CD8-positive, alpha-beta T cell (primary cell): ENCODE measurements at regions of chr19 and their contacts with region 1.

Region 1: DNA sequence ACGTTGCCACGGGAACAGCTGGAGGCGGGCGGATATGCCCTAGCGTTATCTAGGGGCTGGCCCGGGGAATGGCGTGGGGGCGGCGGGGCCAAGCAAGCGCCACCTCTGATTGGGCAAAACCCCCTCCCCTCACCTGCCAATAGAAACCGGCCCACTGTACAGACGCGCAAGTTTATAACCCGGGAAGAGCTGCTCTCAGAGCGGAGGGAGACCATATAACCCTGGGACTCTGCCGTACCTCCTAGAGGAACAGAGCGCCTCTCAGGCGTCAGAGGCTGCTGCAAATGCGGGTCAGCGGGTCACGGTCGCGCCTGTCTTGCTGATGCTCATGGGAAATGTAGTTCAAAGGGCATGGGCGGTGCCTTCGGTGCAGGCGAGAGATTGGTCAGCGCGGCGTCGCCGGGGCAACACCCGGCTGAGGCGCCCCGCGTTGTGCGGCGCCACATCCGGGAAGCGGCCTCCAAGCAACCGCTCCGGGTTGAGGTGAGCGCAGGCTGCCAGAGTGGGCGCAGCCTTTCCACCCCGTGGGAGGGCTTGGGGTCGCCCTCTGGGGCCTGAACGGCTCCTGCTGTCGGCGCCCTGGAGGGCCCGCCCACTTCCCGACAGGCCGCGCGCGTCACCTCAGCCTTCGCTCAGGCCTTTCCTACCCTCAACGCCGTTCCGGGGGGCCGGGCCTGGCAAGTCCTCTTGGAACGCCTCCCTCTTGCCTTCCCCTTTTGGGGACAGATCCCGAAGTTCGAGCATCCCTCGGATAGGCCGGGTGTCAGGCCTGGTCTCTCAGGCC is at the start of gene ZNF446:
- DNase-seq: peak; percentile 92 to 99 (median 97)
- ATAC-seq: peak; percentile 82
- H3K4me3 ChIP-seq: peak within 1 kb of the TSS; percentile 56 to 72
- H3K4me3 Mint-ChIP-seq: peak within 1 kb of the TSS; percentile 92
- H3K27ac ChIP-seq: peak within 1 kb of the TSS; percentile 75 to 95
- H3K27ac Mint-ChIP-seq: peak within 1 kb of the TSS; percentile 97
- H3K4me1 ChIP-seq: peaks cover 17% of the 10 kb centered on the region
- H3K4me1 Mint-ChIP-seq: peaks cover 16% of the 10 kb centered on the region
- H3K27me3 ChIP-seq: no peaks in the 10 kb centered on the region
- H3K27me3 Mint-ChIP-seq: no peaks in the 10 kb centered on the region
- CTCF ChIP-seq: no peak
- total RNA-seq, gene ZNF446: 14.6 to 16.5 TPM

Region 2: GRCh38 chr19:58182989-58183816 is 292.7 kb before region 1 on chr19 and contains the start of gene ZNF274:
- CTCF ChIA-PET with region 1: no interaction called
- POLR2A ChIA-PET with region 1: no interaction called
- intact Hi-C with region 1: loop called in 1 of 2 experiments (anchors 1 kb)
- DNase-seq: peak; percentile 88 to 96 (median 94)
- ATAC-seq: peak; percentile 86
- H3K4me3 ChIP-seq: peak within 1 kb of the TSS; percentile 90 to 94
- H3K4me3 Mint-ChIP-seq: peak within 1 kb of the TSS; percentile 91
- H3K27ac ChIP-seq: peak within 1 kb of the TSS; percentile 99 to 100
- H3K27ac Mint-ChIP-seq: peak within 1 kb of the TSS; percentile 100
- H3K4me1 ChIP-seq: peaks cover 9% of the 10 kb centered on the region
- H3K4me1 Mint-ChIP-seq: peaks cover 22% of the 10 kb centered on the region
- H3K27me3 ChIP-seq: no peaks in the 10 kb centered on the region
- H3K27me3 Mint-ChIP-seq: no peaks in the 10 kb centered on the region
- CTCF ChIP-seq: no peak
- total RNA-seq, gene ZNF274: 52.7 to 58.9 TPM

Region 3: GRCh38 chr19:58451358-58452101 is 24.4 kb before region 1 on chr19 and contains the start of gene ZNF324B:
- CTCF ChIA-PET with region 1: interaction called, 5 read pairs
- POLR2A ChIA-PET with region 1: no interaction called
- intact Hi-C with region 1: loop called (anchors 1 kb)
- DNase-seq: peak; percentile 92 to 98 (median 96)
- ATAC-seq: peak; percentile 96
- H3K4me3 ChIP-seq: peak within 1 kb of the TSS; percentile 55 to 83
- H3K4me3 Mint-ChIP-seq: peak within 1 kb of the TSS; percentile 82
- H3K27ac ChIP-seq: peak within 1 kb of the TSS; percentile 44 to 70
- H3K27ac Mint-ChIP-seq: peak within 1 kb of the TSS; percentile 27
- H3K4me1 ChIP-seq: peaks cover 10% of the 10 kb centered on the region
- H3K4me1 Mint-ChIP-seq: peaks cover 16% of the 10 kb centered on the region
- H3K27me3 ChIP-seq: peaks cover 0 to 9% of the 10 kb centered on the region in 2 experiments
- H3K27me3 Mint-ChIP-seq: peaks cover 9% of the 10 kb centered on the region
- CTCF ChIP-seq: no peak
- total RNA-seq, gene ZNF324B: 6.2 to 6.5 TPM

Region 4: DNA sequence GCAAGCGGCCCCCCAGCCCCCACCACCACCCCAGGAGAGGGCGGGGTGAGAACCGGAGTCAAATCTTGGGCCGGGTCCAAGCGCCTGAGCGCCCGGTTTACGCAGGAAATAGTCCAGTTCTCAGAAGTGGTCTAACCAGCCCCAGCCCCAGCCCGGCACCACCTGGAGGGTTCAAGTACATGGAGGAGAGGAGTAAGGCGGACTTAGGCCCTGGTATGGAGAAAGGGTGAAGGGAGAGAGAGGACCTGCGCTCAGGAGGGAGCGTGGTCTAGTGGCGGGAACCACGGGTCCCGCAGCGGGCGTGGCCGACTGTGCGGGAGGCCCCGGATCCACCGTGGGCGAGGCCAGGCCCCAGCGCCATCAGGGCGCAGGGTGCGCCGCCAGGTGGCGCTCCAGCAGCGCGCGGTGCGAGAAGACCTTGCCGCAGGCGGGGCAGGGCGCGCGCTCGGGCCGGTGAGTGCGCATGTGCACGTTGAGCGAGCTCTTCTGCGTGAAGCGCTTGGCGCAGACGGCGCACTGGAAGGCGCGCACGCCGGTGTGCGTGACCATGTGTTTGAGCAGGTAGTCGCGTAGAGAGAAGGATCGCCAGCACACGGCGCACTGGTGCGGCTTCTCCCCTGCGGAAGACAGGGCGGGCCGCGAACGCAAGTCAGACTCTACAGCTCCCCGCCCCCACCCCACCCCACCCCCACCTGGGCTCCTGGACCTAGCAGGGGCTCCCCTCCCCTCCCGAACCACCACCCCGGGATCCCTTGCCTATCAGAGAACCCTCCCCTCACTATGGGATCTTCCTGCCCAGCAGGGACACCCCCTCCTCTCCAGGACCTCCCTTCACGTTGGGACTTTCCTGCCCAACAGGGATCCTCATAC is 38.0 kb after region 1 on chr19:
- CTCF ChIA-PET with region 1: no interaction called
- POLR2A ChIA-PET with region 1: interaction called, 4 read pairs
- intact Hi-C with region 1: loop called (anchors 1 kb)
- DNase-seq: peak; percentile 86 to 97 (median 94)
- ATAC-seq: peak; percentile 94
- H3K4me3 ChIP-seq: peak overlapping the region; percentile 10 to 32
- H3K4me3 Mint-ChIP-seq: peak overlapping the region; percentile 78
- H3K27ac ChIP-seq: peak overlapping the region; percentile 21 to 71
- H3K27ac Mint-ChIP-seq: peak overlapping the region; percentile 78
- H3K4me1 ChIP-seq: peaks cover 25% of the 10 kb centered on the region
- H3K4me1 Mint-ChIP-seq: peaks cover 35% of the 10 kb centered on the region
- H3K27me3 ChIP-seq: no peaks in the 10 kb centered on the region
- H3K27me3 Mint-ChIP-seq: no peaks in the 10 kb centered on the region
- CTCF ChIP-seq: peak; percentile 85

Region 5: DNA sequence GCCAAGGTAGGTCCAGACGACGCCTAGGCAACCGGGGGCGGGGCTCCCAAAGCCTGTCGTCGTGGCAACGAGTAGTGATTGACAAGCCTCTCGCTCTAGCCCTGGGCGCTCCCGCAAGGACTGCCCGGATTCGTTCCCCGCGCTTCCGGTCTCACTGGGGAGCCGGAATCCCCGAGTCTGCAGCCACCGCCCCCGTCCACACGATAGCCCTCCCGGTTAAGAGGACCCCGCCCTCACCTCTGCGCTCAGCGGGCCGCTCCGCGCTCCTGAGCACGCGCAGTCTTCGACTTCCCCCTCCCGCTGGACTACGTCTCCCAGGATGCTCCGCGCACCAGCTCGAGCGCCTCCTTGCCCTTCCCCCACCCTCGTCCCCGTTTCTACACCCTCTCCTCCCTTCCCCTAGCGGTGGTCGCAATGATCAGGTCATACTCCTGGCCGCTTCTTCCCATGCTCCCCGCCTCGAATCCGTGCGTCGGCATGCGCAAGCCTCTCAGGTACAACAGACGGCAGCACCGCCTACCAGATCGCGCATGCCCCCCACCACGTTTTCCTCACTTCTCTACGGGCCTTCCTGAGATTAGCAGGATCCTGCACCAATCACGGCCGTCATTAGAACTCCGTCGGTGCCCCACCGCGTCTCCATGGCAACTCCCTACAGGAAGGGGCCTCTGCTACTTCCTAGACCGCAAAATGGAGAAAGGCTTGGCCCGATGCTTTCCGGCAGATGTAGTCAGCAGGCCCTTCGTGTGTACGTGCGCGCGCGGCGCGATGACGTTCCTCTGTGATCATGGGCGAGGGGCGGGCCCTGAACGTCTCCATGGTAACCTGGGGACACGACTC is 97.1 kb after region 1 on chr19 and contains the start of gene MZF1:
- CTCF ChIA-PET with region 1: no interaction called
- POLR2A ChIA-PET with region 1: no interaction called
- intact Hi-C with region 1: loop called (anchors 1 kb)
- DNase-seq: peak; percentile 99 to 100 (median 99)
- ATAC-seq: peak; percentile 70
- H3K4me3 ChIP-seq: peak within 1 kb of the TSS; percentile 83 to 84
- H3K4me3 Mint-ChIP-seq: peak within 1 kb of the TSS; percentile 98
- H3K27ac ChIP-seq: peak within 1 kb of the TSS; percentile 98 to 100
- H3K27ac Mint-ChIP-seq: peak within 1 kb of the TSS; percentile 99
- H3K4me1 ChIP-seq: peaks cover 22% of the 10 kb centered on the region
- H3K4me1 Mint-ChIP-seq: peaks cover 30% of the 10 kb centered on the region
- H3K27me3 ChIP-seq: no peaks in the 10 kb centered on the region
- H3K27me3 Mint-ChIP-seq: no peaks in the 10 kb centered on the region
- CTCF ChIP-seq: no peak
- total RNA-seq, gene MZF1: 14.1 to 15.0 TPM